ENCODE measurements at regions of chr3 and their contacts with region 1.

Region 1: GRCh38 chr3:52867098-52867800 is 30.1 kb downstream of the STIMATE start:
- DNase-seq: no peak
- ATAC-seq: no peak
- H3K4me3 ChIP-seq: no peak overlapping the region
- H3K4me3 Mint-ChIP-seq: no peak overlapping the region
- H3K27ac ChIP-seq: no peak overlapping the region
- H3K27ac Mint-ChIP-seq: no peak overlapping the region
- H3K4me1 ChIP-seq: no peaks in the 10 kb centered on the region
- H3K4me1 Mint-ChIP-seq: peaks cover 8% of the 10 kb centered on the region
- H3K27me3 ChIP-seq: no peaks in the 10 kb centered on the region
- H3K27me3 Mint-ChIP-seq: no peaks in the 10 kb centered on the region
- CTCF ChIP-seq: no peak

Region 2: GRCh38 chr3:52990637-52991036 is 123.4 kb after region 1 on chr3:
- CTCF ChIA-PET with region 1: no interaction called
- POLR2A ChIA-PET with region 1: no interaction called
- intact Hi-C with region 1: no loop called
- DNase-seq: no peak
- ATAC-seq: no peak
- H3K4me3 ChIP-seq: no peak overlapping the region
- H3K4me3 Mint-ChIP-seq: no peak overlapping the region
- H3K27ac ChIP-seq: no peak overlapping the region
- H3K27ac Mint-ChIP-seq: no peak overlapping the region
- H3K4me1 ChIP-seq: no peaks in the 10 kb centered on the region
- H3K4me1 Mint-ChIP-seq: peaks cover 59% of the 10 kb centered on the region
- H3K27me3 ChIP-seq: no peaks in the 10 kb centered on the region
- H3K27me3 Mint-ChIP-seq: no peaks in the 10 kb centered on the region
- CTCF ChIP-seq: no peak

Region 3: DNA sequence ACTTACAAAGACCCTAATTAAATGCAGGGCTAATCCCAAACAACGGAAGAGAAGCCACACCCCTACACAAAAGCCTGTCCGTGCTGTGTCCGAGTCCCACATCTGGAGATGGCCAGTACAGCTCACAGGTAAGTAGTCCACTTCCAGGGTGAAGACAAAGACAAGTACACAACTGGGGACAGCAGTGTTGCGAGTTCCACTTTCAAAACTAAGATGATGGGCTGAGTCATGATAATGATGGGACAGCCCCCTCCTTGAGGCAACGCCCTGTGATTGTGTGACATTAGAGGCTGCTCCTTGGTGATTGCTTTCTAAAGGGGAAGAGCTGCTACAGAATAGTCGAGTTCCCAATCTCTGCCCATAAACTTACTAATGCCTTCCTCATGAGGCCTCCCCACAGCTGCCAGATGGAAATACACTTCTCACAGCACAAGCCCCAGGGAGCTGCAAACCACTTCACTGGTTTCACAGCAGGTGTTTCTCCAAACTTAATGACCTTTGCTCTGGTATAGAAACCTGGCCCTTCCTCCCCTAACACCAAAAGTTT is 235.4 kb after region 1 on chr3:
- CTCF ChIA-PET with region 1: no interaction called
- POLR2A ChIA-PET with region 1: no interaction called
- intact Hi-C with region 1: no loop called
- DNase-seq: peak in 6 of 14 experiments; percentile 3 to 66 (median 46)
- ATAC-seq: peak; percentile 68
- H3K4me3 ChIP-seq: no peak overlapping the region
- H3K4me3 Mint-ChIP-seq: peak overlapping the region; percentile 76
- H3K27ac ChIP-seq: no peak overlapping the region
- H3K27ac Mint-ChIP-seq: peak overlapping the region; percentile 90
- H3K4me1 ChIP-seq: peaks cover 37% of the 10 kb centered on the region
- H3K4me1 Mint-ChIP-seq: peaks cover 70% of the 10 kb centered on the region
- H3K27me3 ChIP-seq: no peaks in the 10 kb centered on the region
- H3K27me3 Mint-ChIP-seq: no peaks in the 10 kb centered on the region
- CTCF ChIP-seq: no peak

Region 4: DNA sequence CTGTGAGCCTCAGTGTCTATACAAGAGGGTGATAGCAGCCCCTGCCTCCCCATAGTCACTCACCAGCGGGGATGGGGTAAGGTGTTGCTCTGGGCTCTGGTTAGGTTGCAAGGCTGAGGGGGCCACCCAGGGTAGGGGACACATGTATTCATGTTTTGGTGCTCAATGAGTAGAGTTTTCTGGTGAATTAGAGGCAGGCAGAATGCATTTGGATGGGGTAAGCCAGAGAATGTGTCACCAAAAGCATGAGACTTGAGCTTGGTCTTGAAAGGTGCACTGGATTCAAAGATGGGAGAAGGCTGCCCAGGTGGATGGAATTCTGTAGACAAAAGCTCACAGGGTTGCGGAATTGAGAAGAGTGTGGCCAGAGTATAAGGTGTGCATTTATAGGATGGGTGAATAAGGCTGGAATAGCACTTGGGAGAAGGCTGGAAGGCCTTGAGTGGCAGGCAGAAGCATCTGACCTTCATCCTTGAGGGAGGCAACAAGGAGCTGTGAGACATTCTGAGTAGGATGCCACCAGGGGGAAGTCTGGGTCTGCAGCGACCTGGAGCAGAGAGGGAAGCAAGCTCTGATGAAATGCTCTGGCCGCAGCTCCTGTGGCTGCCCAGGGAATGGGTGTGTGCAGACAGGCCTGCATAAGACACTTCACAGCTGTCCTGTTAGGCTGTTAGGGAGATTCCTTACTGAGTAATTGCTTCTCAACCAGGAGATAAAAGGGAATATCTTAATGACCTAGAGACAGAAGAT is 829.3 kb after region 1 on chr3:
- CTCF ChIA-PET with region 1: no interaction called
- POLR2A ChIA-PET with region 1: no interaction called
- intact Hi-C with region 1: loop called in 1 of 2 experiments (anchors 10 kb)
- DNase-seq: peak in 1 of 14 experiments; percentile 9
- ATAC-seq: no peak
- H3K4me3 ChIP-seq: no peak overlapping the region
- H3K4me3 Mint-ChIP-seq: no peak overlapping the region
- H3K27ac ChIP-seq: no peak overlapping the region
- H3K27ac Mint-ChIP-seq: no peak overlapping the region
- H3K4me1 ChIP-seq: no peaks in the 10 kb centered on the region
- H3K4me1 Mint-ChIP-seq: no peaks in the 10 kb centered on the region
- H3K27me3 ChIP-seq: peaks cover 4 to 8% of the 10 kb centered on the region in 2 experiments
- H3K27me3 Mint-ChIP-seq: peaks cover 7% of the 10 kb centered on the region
- CTCF ChIP-seq: no peak

Measured in CD4-positive, alpha-beta T cell (primary cell).